GM10248 (cell line): ENCODE measurements at regions of chr19 and their contacts with region 1.

Region 1: GRCh38 chr19:41439441-41440222 is at the start of gene DMAC2:
- DNase-seq: peak; percentile 92
- CTCF ChIP-seq: peak; percentile 65

Region 2: DNA sequence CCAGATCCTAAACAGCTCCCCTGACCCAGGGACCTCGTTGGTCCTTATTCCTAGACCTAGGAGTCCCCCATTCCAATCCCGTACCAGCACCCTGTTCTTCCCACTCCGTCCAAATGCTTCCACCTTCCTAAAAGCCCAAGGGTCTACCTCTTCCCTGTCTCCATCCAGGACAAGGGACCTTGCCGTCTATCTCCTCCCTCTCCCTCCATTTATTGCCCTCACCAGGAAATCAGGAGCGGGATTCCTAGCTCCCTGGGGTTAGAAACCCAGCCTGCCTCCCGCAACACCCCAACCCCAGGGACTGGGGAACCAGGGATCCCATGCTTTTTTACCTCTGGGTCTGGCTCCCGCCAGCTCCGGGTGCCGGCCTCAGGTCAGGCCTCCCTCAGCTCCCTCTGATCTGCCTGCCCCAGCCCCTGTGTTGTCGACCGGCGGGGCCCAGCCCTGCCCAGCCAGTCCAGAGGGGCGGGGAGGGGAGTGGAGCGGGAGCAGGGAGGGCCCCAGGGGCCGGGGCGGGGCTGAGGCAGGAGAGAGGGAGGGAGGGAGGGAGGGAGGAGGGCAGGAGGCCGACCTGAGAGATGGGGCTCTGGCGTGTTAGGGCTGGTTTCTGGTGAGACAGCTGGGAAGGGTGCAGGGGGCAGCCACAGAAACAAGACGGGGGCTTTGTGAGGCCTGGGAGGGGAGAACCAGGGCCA is 12.5 kb before region 1 on chr19 and contains the start of gene B3GNT8:
- CTCF ChIA-PET with region 1: interaction called, 11 read pairs
- POLR2A ChIA-PET with region 1: no interaction called
- DNase-seq: peak; percentile 86
- CTCF ChIP-seq: no peak

Region 3: DNA sequence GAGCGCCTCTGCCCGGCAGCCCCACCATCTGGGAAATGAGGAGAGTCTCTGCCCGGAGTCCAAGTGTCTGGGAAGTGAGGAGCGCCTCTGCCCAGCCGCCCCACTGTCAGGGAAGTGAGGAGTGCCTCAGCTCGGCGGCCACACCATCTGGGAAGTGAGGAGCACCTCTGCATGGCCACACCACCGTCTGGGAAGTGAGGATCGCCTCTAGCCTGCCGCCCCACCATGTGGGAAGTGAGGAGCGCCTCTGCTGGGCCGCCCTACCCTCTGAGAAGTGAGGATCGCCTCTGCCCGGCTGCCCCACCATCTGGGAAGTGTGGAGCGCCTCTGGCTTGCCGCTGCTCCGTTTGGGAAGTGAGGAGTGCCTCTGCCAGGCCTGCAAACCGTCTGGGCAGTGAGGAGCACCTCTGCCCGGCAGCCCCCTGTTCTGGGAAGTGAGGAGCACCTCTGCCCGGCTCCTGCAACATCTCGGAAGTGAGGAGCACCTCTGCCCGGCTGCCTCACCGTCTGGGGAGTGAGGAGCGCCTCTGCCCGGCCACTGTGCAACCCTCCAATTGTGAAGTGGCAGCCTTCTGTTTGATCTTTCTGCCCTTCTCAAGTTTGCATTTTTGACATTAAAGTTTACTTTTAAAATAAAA is 75.5 kb after region 1 on chr19:
- CTCF ChIA-PET with region 1: no interaction called
- POLR2A ChIA-PET with region 1: no interaction called
- DNase-seq: no peak
- CTCF ChIP-seq: no peak